Activated CD8-positive, alpha-beta T cell treated with anti-CD3 and anti-CD28 coated beads for 36 hours (primary cell): ENCODE measurements at regions of chr4 and their contacts with region 1.

Region 1: GRCh38 chr4:47836641-47837093 is 1.2 kb downstream of the CORIN start:
- DNase-seq: peak; percentile 70
- ATAC-seq: peak; percentile 71
- H3K4me3 Mint-ChIP-seq: peak overlapping the region; percentile 74
- H3K27ac Mint-ChIP-seq: no peak overlapping the region
- H3K4me1 Mint-ChIP-seq: peaks cover 31% of the 10 kb centered on the region
- H3K27me3 Mint-ChIP-seq: peaks cover 11% of the 10 kb centered on the region
- CTCF ChIP-seq: peak; percentile 63

Region 2: GRCh38 chr4:47668810-47669408 is 167.8 kb before region 1 on chr4:
- CTCF ChIA-PET with region 1: interaction called, 14 read pairs
- POLR2A ChIA-PET with region 1: no interaction called
- intact Hi-C with region 1: no loop called
- DNase-seq: peak; percentile 35
- ATAC-seq: peak; percentile 65
- H3K4me3 Mint-ChIP-seq: no peak overlapping the region
- H3K27ac Mint-ChIP-seq: no peak overlapping the region
- H3K4me1 Mint-ChIP-seq: no peaks in the 10 kb centered on the region
- H3K27me3 Mint-ChIP-seq: peaks cover 10% of the 10 kb centered on the region
- CTCF ChIP-seq: peak; percentile 78

Region 3: DNA sequence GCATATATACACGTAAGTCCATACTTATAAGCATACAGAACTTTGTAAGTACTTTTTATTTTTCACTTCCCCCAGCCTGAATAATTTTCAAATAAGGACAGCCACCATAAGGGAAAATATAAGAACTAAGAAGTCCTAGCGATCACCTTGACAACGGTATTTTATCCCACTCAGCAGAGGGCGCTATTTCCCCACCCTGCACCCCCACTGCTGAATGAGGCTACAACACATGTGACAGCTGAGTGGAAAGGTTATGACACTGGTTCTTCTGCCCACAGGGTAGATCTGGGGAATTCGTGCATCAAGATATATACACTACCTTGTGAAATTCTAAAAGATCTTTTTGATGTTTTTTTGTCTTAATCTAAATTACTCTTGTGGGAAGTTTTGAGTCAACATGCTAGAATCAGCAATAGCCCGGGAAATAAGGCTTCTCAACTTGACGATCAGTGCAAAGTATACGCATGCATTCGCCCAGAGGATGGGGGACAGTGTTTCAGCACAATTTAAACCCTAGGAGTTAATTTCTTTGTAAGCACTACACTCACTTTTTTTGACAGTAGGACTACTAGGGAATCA is 150.3 kb before region 1 on chr4:
- CTCF ChIA-PET with region 1: interaction called, 32 read pairs
- POLR2A ChIA-PET with region 1: no interaction called
- intact Hi-C with region 1: loop called (anchors 5 kb)
- DNase-seq: peak; percentile 81
- ATAC-seq: peak; percentile 92
- H3K4me3 Mint-ChIP-seq: no peak overlapping the region
- H3K27ac Mint-ChIP-seq: no peak overlapping the region
- H3K4me1 Mint-ChIP-seq: no peaks in the 10 kb centered on the region
- H3K27me3 Mint-ChIP-seq: peaks cover 3% of the 10 kb centered on the region
- CTCF ChIP-seq: peak; percentile 93

Region 4: GRCh38 chr4:47704693-47705325 is 131.9 kb before region 1 on chr4:
- CTCF ChIA-PET with region 1: interaction called, 19 read pairs
- POLR2A ChIA-PET with region 1: no interaction called
- intact Hi-C with region 1: no loop called
- DNase-seq: peak; percentile 30
- ATAC-seq: peak; percentile 51
- H3K4me3 Mint-ChIP-seq: no peak overlapping the region
- H3K27ac Mint-ChIP-seq: no peak overlapping the region
- H3K4me1 Mint-ChIP-seq: peaks cover 5% of the 10 kb centered on the region
- H3K27me3 Mint-ChIP-seq: peaks cover 12% of the 10 kb centered on the region
- CTCF ChIP-seq: no peak

Region 5: DNA sequence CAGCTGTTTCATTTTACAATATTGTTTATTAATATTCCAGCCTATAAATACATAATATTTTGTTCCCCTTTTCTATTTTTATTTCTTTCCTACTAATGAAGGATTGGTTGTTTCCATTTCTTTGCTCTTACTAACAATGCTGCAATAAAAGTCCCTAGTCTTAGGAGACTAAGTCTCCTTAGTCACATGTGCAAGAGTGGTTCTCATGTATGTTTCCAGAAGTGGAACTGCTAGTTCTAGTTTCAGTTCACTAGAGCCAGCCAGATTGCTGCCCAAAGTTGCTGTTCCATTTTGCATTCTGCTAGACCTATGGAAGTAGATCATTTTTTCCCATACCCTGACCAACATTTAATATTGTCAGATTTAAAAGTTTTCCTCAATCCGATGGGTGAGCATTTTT is 135.5 kb after region 1 on chr4:
- CTCF ChIA-PET with region 1: no interaction called
- POLR2A ChIA-PET with region 1: no interaction called
- intact Hi-C with region 1: no loop called
- DNase-seq: no peak
- ATAC-seq: no peak
- H3K4me3 Mint-ChIP-seq: no peak overlapping the region
- H3K27ac Mint-ChIP-seq: no peak overlapping the region
- H3K4me1 Mint-ChIP-seq: no peaks in the 10 kb centered on the region
- H3K27me3 Mint-ChIP-seq: peaks cover 2% of the 10 kb centered on the region
- CTCF ChIP-seq: no peak

Region 6: GRCh38 chr4:48071121-48071612 is 234.5 kb after region 1 on chr4:
- CTCF ChIA-PET with region 1: no interaction called
- POLR2A ChIA-PET with region 1: no interaction called
- intact Hi-C with region 1: no loop called
- DNase-seq: no peak
- ATAC-seq: no peak
- H3K4me3 Mint-ChIP-seq: no peak overlapping the region
- H3K27ac Mint-ChIP-seq: no peak overlapping the region
- H3K4me1 Mint-ChIP-seq: peaks cover 15% of the 10 kb centered on the region
- H3K27me3 Mint-ChIP-seq: no peaks in the 10 kb centered on the region
- CTCF ChIP-seq: no peak

Region 7: GRCh38 chr4:48085821-48086607 is 249.3 kb after region 1 on chr4:
- CTCF ChIA-PET with region 1: no interaction called
- POLR2A ChIA-PET with region 1: no interaction called
- intact Hi-C with region 1: no loop called
- DNase-seq: no peak
- ATAC-seq: peak; percentile 49
- H3K4me3 Mint-ChIP-seq: no peak overlapping the region
- H3K27ac Mint-ChIP-seq: no peak overlapping the region
- H3K4me1 Mint-ChIP-seq: peaks cover 36% of the 10 kb centered on the region
- H3K27me3 Mint-ChIP-seq: no peaks in the 10 kb centered on the region
- CTCF ChIP-seq: no peak